ENCODE measurements at regions of chr1 and their contacts with region 1.

Region 1: GRCh38 chr1:170074250-170075157 is at the start of gene KIFAP3:
- DNase-seq: peak; percentile 97 to 99 (median 99)
- ATAC-seq: peak; percentile 99 to 100 (median 100)
- H3K4me3 ChIP-seq: peak within 1 kb of the TSS; percentile 40 to 83 (median 70)
- H3K27ac ChIP-seq: peak within 1 kb of the TSS; percentile 58 to 92 (median 86)
- H3K4me1 ChIP-seq: peaks cover 0 to 32% (median 17%) of the 10 kb centered on the region in 12 donors
- H3K27me3 ChIP-seq: no peaks in the 10 kb centered on the region
- CTCF ChIP-seq: peak; percentile 47 to 76 (median 60)
- POLR2A ChIP-seq: peak in 1 of 2 donors; percentile 75
- total RNA-seq, gene KIFAP3: 31.0 to 75.0 (median 53.5) TPM

Region 2: GRCh38 chr1:169893494-169894362 is 180.8 kb before region 1 on chr1 and contains the start of gene SCYL3:
- intact Hi-C with region 1: loop called in 3 of 10 experiments (anchors 5 to 10 kb)
- DNase-seq: peak; percentile 94 to 97 (median 96)
- ATAC-seq: peak; percentile 98 to 99 (median 99)
- H3K4me3 ChIP-seq: peak within 1 kb of the TSS; percentile 78 to 99 (median 94)
- H3K27ac ChIP-seq: peak within 1 kb of the TSS; percentile 94 to 100 (median 97)
- H3K4me1 ChIP-seq: peaks cover 0 to 38% (median 18%) of the 10 kb centered on the region in 12 donors
- H3K27me3 ChIP-seq: peaks cover 0 to 6% (median 0%) of the 10 kb centered on the region in 9 donors
- CTCF ChIP-seq: peak in 1 of 12 donors; percentile 19
- POLR2A ChIP-seq: peak in 1 of 2 donors; percentile 33
- total RNA-seq, gene SCYL3: 4.9 to 8.6 (median 6.4) TPM

Region 3: GRCh38 chr1:169915150-169915549 is 159.4 kb before region 1 on chr1:
- intact Hi-C with region 1: no loop called
- DNase-seq: no peak
- ATAC-seq: no peak
- H3K4me3 ChIP-seq: no peak overlapping the region
- H3K27ac ChIP-seq: no peak overlapping the region
- H3K4me1 ChIP-seq: peaks cover 0 to 8% (median 0%) of the 10 kb centered on the region in 12 donors
- H3K27me3 ChIP-seq: no peaks in the 10 kb centered on the region
- CTCF ChIP-seq: no peak
- POLR2A ChIP-seq: no peak

Region 4: DNA sequence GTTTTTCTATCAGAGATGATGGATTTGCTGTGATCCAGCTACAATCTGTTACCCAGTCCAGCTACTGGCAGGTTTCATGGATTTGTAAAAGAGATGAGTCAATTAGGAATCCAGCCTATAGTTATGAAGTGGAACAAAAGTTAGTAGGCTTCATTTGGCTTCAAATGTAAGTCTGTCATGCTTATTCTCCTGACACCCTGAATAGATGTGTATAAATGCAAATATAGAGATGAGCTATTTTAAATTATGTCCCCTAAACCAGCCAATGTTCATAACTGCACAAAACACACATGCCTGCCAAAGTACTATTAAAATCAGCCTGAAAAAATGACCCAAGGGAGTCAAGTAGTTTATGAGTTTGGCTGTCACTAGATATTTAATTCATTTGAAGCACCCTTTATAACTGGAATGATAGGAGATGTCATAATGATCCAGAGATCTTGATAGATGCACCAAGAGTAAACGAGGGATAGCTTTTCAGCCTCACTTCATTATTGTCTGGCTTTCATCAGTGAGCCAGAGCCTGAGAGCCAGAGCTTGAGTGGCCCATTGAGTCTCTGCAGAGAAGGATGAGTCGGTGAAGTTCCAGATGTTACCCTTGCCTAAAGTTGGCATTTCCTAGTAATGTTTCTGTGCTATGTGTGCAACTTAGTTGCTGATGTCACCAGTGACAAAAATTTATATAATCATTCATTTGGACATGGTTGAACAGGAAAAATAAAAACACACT is 59.4 kb after region 1 on chr1:
- intact Hi-C with region 1: no loop called
- DNase-seq: no peak
- ATAC-seq: no peak
- H3K4me3 ChIP-seq: no peak overlapping the region
- H3K27ac ChIP-seq: no peak overlapping the region
- H3K4me1 ChIP-seq: peaks cover 0 to 9% (median 0%) of the 10 kb centered on the region in 12 donors
- H3K27me3 ChIP-seq: no peaks in the 10 kb centered on the region
- CTCF ChIP-seq: no peak
- POLR2A ChIP-seq: no peak

Region 5: DNA sequence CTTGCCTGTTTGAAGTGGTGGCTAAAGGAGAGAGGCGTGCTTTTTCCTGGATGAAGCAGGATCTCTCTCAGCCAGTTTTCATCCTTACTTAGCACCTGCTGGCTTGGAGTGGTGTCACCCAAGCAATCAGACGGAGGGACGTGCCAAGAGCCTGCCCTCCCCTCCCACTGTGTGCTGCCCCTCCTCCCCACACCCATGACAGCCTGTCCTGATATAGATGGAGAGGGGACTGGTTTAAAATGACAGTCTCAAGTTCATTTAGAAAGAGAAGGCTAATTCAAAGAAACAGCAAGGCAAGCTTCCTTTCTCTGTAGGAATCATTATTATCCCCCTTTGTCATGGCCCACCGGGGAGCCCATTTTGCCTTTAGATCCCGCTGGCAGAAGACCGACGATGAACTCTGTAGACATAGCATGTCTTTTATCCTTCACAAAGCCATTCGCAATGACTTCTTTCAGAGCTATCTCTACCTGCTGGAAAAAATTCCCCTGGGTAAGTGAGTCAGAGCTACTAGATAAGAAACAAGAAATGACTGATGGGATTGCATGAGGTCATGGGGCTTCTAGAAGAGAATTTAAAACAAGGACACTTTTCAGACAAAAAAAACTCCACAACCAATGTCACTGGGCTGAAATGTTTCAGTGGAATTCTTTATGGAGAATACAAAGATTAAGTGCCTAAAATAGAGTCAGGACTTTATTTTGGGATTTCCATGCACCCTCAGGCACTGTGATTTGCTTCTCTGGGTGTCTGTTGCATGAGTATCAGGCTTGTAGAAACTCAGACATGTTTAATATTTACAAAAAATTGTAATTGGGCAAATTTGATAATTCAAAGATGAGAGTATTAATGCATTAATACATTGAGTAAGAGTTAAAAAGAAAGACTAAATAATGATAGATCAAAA is 71.5 kb after region 1 on chr1 and contains the start of gene NTMT2:
- intact Hi-C with region 1: loop called in 1 of 10 experiments (anchors 10 kb)
- DNase-seq: peak; percentile 64 to 83 (median 72)
- ATAC-seq: peak; percentile 93 to 99 (median 97)
- H3K4me3 ChIP-seq: peak within 1 kb of the TSS in 10 of 12 donors; percentile 7 to 49 (median 34)
- H3K27ac ChIP-seq: peak within 1 kb of the TSS; percentile 56 to 97 (median 83)
- H3K4me1 ChIP-seq: peaks cover 0 to 24% (median 5%) of the 10 kb centered on the region in 12 donors
- H3K27me3 ChIP-seq: no peaks in the 10 kb centered on the region
- CTCF ChIP-seq: no peak
- POLR2A ChIP-seq: no peak
- total RNA-seq, gene NTMT2: 0.56 to 3.6 (median 2.0) TPM

Measured in heart left ventricle (tissue), 16 donors.